Naive thymus-derived CD4-positive, alpha-beta T cell (primary cell): ENCODE measurements at regions of chr22 and their contacts with region 1.

Region 1: DNA sequence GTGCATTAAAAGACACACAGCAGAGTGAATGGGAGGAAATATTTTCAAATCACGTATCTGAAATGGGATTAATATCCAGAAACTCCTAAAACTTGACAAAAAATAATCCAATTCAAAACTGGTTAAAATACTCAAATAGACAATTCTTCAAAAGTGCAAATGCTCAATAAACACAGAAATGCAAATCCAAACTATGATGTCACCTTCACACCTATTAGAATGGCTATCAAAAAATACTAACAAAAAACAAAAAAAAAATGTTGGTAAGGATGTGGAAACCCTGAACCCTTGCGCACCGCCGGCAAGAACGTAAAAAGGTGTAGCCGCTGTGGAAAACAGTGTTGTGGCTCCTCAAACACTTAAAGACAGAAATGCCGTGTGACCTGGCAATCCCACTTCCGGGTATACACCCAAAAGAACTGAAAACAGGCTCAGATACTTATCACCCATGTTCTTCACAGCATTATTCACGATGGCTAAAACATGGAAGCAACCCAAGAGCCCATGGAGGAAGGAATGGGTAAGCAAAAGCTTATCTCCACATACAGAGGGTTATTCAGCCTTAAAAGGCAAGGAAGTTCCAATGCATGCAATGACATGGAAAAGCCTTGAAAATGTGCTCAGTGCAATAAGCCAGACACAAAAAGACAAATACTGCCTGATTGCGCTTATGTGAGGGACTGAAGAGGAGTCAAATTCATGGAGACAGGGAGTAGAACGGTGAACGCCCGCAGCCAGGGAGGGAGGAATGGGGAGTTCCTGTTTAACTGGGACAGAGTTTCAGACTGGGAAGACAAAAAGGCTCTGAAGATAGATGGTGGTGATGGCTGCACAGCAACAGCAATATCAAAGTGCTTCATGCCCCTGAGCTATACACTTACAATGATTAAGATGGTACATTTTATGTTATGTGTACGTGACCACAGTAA is 19.6 kb downstream of the BRD1 start:
- DNase-seq: peak in 7 of 9 donors; percentile 64 to 85 (median 78)
- ATAC-seq: peak; percentile 76
- H3K4me3 ChIP-seq: no peak overlapping the region
- H3K4me3 Mint-ChIP-seq: peak overlapping the region; percentile 61 to 81 (median 68)
- H3K27ac ChIP-seq: peak overlapping the region; percentile 43
- H3K27ac Mint-ChIP-seq: peak overlapping the region; percentile 78 to 98 (median 91)
- H3K4me1 ChIP-seq: peaks cover 24 to 55% of the 10 kb centered on the region in 2 donors
- H3K4me1 Mint-ChIP-seq: peaks cover 58 to 91% (median 76%) of the 10 kb centered on the region in 7 donors
- H3K27me3 ChIP-seq: no peaks in the 10 kb centered on the region
- H3K27me3 Mint-ChIP-seq: no peaks in the 10 kb centered on the region

Region 2: DNA sequence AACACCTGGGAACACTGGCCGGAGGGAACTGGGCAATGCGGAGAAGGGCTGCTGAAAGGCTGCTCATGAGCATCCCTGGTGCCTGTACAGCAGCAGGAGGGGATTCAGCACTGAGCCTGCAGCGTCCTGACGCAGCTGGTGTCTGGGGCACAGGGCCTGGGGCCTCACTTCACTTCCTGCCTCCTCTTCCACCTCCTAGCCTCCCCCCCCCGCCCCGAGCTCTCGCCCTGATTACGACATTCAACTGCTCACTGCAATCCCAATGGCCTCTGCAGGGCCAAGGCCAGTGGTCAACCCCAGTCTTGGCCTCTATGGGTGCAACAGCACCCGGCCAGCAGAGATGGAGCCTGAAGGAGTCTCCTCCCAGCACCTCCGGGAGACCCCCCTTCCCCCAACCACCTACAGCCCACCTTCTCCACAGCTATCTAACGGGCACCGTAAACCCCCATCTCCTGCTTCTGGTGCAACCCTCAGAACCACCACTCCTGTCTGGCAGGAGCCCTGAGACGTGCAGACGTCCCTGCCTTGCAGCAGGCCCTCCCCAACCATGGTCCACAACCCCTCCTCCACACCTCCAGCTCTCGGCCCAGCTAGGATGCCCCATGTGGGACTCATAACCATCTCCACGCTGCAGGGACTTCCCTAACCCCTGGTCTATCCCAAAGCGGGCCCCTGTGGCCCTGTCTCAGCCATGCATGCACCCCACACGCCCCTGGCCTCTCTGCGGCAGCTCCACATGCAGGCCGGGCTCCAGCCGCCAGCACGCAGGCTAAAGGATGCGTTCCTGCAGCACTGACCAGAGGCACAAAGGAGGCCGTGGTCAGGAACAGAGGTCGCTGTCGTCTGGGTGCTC is 18.5 kb before region 1 on chr22:
- CTCF ChIA-PET with region 1: no interaction called
- POLR2A ChIA-PET with region 1: interaction called, 6 read pairs
- intact Hi-C with region 1: loop called in 1 of 2 experiments (anchors 2 kb)
- DNase-seq: peak in 7 of 9 donors; percentile 38 to 64 (median 54)
- ATAC-seq: peak; percentile 68
- H3K4me3 ChIP-seq: peak overlapping the region; percentile 12
- H3K4me3 Mint-ChIP-seq: peak overlapping the region; percentile 61 to 85 (median 78)
- H3K27ac ChIP-seq: peak overlapping the region; percentile 72
- H3K27ac Mint-ChIP-seq: peak overlapping the region; percentile 80 to 95 (median 92)
- H3K4me1 ChIP-seq: peaks cover 12 to 22% of the 10 kb centered on the region in 2 donors
- H3K4me1 Mint-ChIP-seq: peaks cover 32 to 69% (median 62%) of the 10 kb centered on the region in 7 donors
- H3K27me3 ChIP-seq: no peaks in the 10 kb centered on the region
- H3K27me3 Mint-ChIP-seq: no peaks in the 10 kb centered on the region

Region 3: DNA sequence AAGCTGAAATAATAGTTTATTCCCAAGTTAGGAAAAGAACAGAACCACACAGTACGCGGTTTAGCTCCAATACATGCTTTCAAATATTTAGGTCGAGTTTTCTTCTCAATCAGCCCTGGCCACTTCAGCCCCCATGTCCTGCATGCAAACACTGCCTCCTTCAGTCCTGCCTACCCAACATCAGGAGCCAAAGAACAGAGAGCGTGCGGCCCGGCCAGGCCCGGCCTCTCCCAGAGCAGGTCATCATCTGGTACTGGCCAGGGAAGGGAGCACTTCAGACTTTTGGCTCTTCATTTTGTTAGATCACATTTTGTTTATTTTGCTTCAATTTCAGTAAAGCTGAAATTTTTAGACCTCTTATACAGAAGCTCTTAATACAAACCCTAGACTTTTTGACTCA is 12.9 kb after region 1 on chr22:
- CTCF ChIA-PET with region 1: interaction called, 8 read pairs
- POLR2A ChIA-PET with region 1: interaction called, 22 read pairs
- intact Hi-C with region 1: loop called in 1 of 2 experiments (anchors 2 kb)
- DNase-seq: no peak
- ATAC-seq: no peak
- H3K4me3 ChIP-seq: no peak overlapping the region
- H3K4me3 Mint-ChIP-seq: peak overlapping the region in 3 of 10 donors; percentile 11 to 48 (median 29)
- H3K27ac ChIP-seq: no peak overlapping the region
- H3K27ac Mint-ChIP-seq: peak overlapping the region in 2 of 9 donors; percentile 47 to 55
- H3K4me1 ChIP-seq: peaks cover 30 to 42% of the 10 kb centered on the region in 2 donors
- H3K4me1 Mint-ChIP-seq: peaks cover 52 to 86% (median 78%) of the 10 kb centered on the region in 7 donors
- H3K27me3 ChIP-seq: no peaks in the 10 kb centered on the region
- H3K27me3 Mint-ChIP-seq: no peaks in the 10 kb centered on the region

Region 4: GRCh38 chr22:49827853-49828598 is 20.0 kb after region 1 on chr22 and contains the start of gene BRD1:
- CTCF ChIA-PET with region 1: no interaction called
- POLR2A ChIA-PET with region 1: interaction called, 22 read pairs
- intact Hi-C with region 1: loop called in 1 of 2 experiments (anchors 2 kb)
- DNase-seq: peak in 8 of 9 donors; percentile 35 to 71 (median 52)
- ATAC-seq: peak; percentile 76
- H3K4me3 ChIP-seq: peak within 1 kb of the TSS; percentile 75
- H3K4me3 Mint-ChIP-seq: peak within 1 kb of the TSS; percentile 90 to 93 (median 92)
- H3K27ac ChIP-seq: peak within 1 kb of the TSS; percentile 95
- H3K27ac Mint-ChIP-seq: peak within 1 kb of the TSS; percentile 87 to 96 (median 94)
- H3K4me1 ChIP-seq: peaks cover 28 to 36% of the 10 kb centered on the region in 2 donors
- H3K4me1 Mint-ChIP-seq: peaks cover 33 to 63% (median 50%) of the 10 kb centered on the region in 7 donors
- H3K27me3 ChIP-seq: no peaks in the 10 kb centered on the region
- H3K27me3 Mint-ChIP-seq: peaks cover 0 to 12% (median 0%) of the 10 kb centered on the region in 5 donors
- total RNA-seq, gene BRD1: 50.0 to 130 (median 87.7) TPM

Region 5: DNA sequence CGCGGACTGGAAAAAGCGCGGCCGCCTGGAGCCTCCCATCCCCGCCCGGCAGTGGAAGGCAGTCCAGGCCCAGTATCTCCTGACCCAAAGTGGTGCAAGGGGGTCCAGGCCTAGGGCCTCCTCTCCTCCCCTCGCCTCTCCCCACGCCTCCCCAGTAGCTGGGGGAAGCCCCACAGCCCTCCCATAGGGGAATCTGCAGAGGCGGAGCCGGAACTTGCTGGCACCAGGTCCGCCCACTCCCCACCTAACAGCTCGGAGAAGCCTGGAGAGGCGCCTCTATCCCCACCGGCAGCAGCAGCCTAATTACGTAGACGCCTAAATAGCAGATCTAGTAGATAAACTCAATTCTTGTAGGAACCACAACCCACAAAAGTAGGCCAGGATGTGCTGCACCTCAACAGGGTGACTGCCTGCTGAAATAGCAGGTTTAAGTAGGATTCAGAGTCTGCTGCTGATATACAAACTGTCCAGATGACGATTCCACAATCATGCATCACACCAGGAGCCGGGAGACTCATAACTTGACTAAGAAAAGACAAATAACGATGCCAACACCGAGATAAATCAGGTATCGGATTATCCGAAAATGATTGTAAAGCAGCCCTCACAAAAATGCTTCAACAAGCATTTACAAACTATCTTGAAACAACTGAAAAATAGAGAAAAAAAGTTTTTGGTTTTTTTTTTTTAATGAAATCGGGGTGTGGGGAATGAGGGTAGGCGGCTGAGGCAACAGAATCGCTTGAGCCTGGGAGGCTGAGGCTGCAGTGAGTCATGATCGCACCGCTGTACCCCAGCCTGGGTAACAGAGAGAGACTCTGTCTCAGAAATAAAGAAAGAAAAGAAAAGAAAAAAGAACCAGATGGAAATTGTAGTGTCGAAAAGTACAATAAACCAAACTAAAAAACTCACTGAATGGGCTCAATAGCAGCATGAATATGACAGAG is 31.0 kb after region 1 on chr22:
- CTCF ChIA-PET with region 1: no interaction called
- POLR2A ChIA-PET with region 1: interaction called, 11 read pairs
- intact Hi-C with region 1: loop called in 1 of 2 experiments (anchors 1 kb)
- DNase-seq: peak; percentile 63 to 96 (median 93)
- ATAC-seq: peak; percentile 99
- H3K4me3 ChIP-seq: peak overlapping the region; percentile 66
- H3K4me3 Mint-ChIP-seq: peak overlapping the region; percentile 61 to 86 (median 82)
- H3K27ac ChIP-seq: peak overlapping the region; percentile 100
- H3K27ac Mint-ChIP-seq: peak overlapping the region; percentile 88 to 98 (median 95)
- H3K4me1 ChIP-seq: peaks cover 14 to 18% of the 10 kb centered on the region in 2 donors
- H3K4me1 Mint-ChIP-seq: peaks cover 21 to 32% (median 28%) of the 10 kb centered on the region in 7 donors
- H3K27me3 ChIP-seq: no peaks in the 10 kb centered on the region
- H3K27me3 Mint-ChIP-seq: peaks cover 0 to 12% (median 0%) of the 10 kb centered on the region in 5 donors

Region 6: GRCh38 chr22:49852898-49853894 is 45.2 kb after region 1 on chr22 and contains the start of gene ZBED4:
- CTCF ChIA-PET with region 1: no interaction called
- POLR2A ChIA-PET with region 1: interaction called, 3 read pairs
- intact Hi-C with region 1: loop called (anchors 1 kb)
- DNase-seq: peak; percentile 90 to 100 (median 98)
- ATAC-seq: peak; percentile 95
- H3K4me3 ChIP-seq: peak within 1 kb of the TSS; percentile 68
- H3K4me3 Mint-ChIP-seq: peak within 1 kb of the TSS; percentile 90 to 99 (median 96)
- H3K27ac ChIP-seq: peak within 1 kb of the TSS; percentile 90
- H3K27ac Mint-ChIP-seq: peak within 1 kb of the TSS; percentile 86 to 97 (median 93)
- H3K4me1 ChIP-seq: peaks cover 14 to 31% of the 10 kb centered on the region in 2 donors
- H3K4me1 Mint-ChIP-seq: peaks cover 30 to 62% (median 45%) of the 10 kb centered on the region in 7 donors
- H3K27me3 ChIP-seq: no peaks in the 10 kb centered on the region
- H3K27me3 Mint-ChIP-seq: peaks cover 0 to 17% (median 0%) of the 10 kb centered on the region in 5 donors
- total RNA-seq, gene ZBED4: 13.6 to 20.1 (median 17.1) TPM

Region 7: GRCh38 chr22:49917974-49918910 is 110.2 kb after region 1 on chr22 and contains the starts of genes ALG12 and CRELD2:
- CTCF ChIA-PET with region 1: no interaction called
- POLR2A ChIA-PET with region 1: interaction called, 5 read pairs
- intact Hi-C with region 1: loop called in 1 of 2 experiments (anchors 1 kb)
- DNase-seq: peak; percentile 92 to 98 (median 95)
- ATAC-seq: peak; percentile 99
- H3K4me3 ChIP-seq: peak within 1 kb of the TSS; percentile 96
- H3K4me3 Mint-ChIP-seq: peak within 1 kb of the TSS; percentile 84 to 97 (median 88)
- H3K27ac ChIP-seq: peak within 1 kb of the TSS; percentile 97
- H3K27ac Mint-ChIP-seq: peak within 1 kb of the TSS; percentile 73 to 95 (median 91)
- H3K4me1 ChIP-seq: peaks cover 11 to 20% of the 10 kb centered on the region in 2 donors
- H3K4me1 Mint-ChIP-seq: peaks cover 0 to 36% (median 26%) of the 10 kb centered on the region in 7 donors
- H3K27me3 ChIP-seq: no peaks in the 10 kb centered on the region
- H3K27me3 Mint-ChIP-seq: no peaks in the 10 kb centered on the region
- total RNA-seq, gene ALG12: 16.2 to 22.4 (median 19.5) TPM
- total RNA-seq, gene CRELD2: 19.7 to 80.9 (median 28.5) TPM

Region 8: GRCh38 chr22:50674606-50675549 is 866.8 kb after region 1 on chr22:
- CTCF ChIA-PET with region 1: no interaction called
- POLR2A ChIA-PET with region 1: no interaction called
- intact Hi-C with region 1: no loop called
- DNase-seq: peak in 4 of 9 donors; percentile 17 to 48 (median 26)
- ATAC-seq: peak; percentile 35
- H3K4me3 ChIP-seq: no peak overlapping the region
- H3K4me3 Mint-ChIP-seq: peak overlapping the region; percentile 8 to 85 (median 70)
- H3K27ac ChIP-seq: no peak overlapping the region
- H3K27ac Mint-ChIP-seq: peak overlapping the region in 1 of 9 donors; percentile 79
- H3K4me1 ChIP-seq: peaks cover 8 to 17% of the 10 kb centered on the region in 2 donors
- H3K4me1 Mint-ChIP-seq: peaks cover 4 to 23% (median 16%) of the 10 kb centered on the region in 7 donors
- H3K27me3 ChIP-seq: peaks cover 0 to 3% of the 10 kb centered on the region in 2 donors
- H3K27me3 Mint-ChIP-seq: peaks cover 11 to 48% (median 35%) of the 10 kb centered on the region in 5 donors